HEK293 (cell line): ENCODE measurements at regions of chr2 and their contacts with region 1.

Region 1: DNA sequence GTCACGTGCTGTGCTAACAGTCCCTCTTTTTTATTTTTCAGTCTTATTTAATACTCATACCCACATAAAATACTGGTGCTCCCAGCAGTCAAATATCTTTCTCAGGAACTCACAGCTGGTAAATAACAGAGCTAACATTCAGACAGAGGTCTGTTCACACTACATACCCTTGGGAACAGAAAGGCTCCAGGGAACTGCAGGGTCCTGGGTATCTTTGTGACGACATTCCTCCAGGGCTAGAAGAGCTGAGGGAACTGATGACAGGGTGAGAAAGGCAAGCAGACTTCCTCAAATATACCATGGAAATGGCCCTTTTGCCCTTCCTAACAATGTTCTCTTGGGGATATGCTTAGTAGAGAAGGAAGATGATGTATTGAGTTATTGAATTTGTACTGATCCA is 19.3 kb downstream of the PDE6D start:
- H3K4me3 ChIP-seq: no peak overlapping the region
- H3K27ac ChIP-seq: no peak overlapping the region
- H3K4me1 ChIP-seq: no peaks in the 10 kb centered on the region
- CTCF ChIP-seq: no peak

Region 2: DNA sequence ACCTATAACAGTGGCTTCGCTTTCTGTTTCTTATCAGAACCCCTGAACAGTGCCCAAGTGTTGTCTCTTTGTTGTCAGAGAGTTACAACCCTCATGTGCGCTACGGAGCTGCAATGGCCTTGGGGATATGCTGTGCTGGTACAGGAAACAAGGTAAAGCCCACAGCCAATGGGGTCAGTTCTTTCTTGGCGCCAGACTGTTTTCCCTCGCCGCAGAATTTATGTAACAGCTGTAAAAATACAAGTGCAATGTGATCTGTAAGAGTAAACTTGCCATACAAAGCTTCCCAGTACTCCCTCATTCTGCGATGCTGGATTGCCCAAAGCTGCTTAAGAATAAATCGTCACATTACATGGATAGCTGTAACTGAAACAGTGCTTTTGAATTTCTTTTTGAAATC is 623.0 kb before region 1 on chr2:
- CTCF ChIA-PET with region 1: interaction called, 10 read pairs
- POLR2A ChIA-PET with region 1: no interaction called
- H3K4me3 ChIP-seq: no peak overlapping the region
- H3K27ac ChIP-seq: no peak overlapping the region
- H3K4me1 ChIP-seq: peaks cover 8% of the 10 kb centered on the region; the same call in 1 of the 2 replicates
- CTCF ChIP-seq: no peak

Region 3: GRCh38 chr2:231745303-231746038 is 16.3 kb before region 1 on chr2:
- CTCF ChIA-PET with region 1: interaction called, 13 read pairs
- POLR2A ChIA-PET with region 1: interaction called, 3 read pairs
- H3K4me3 ChIP-seq: no peak overlapping the region
- H3K27ac ChIP-seq: no peak overlapping the region
- H3K4me1 ChIP-seq: no peaks in the 10 kb centered on the region
- CTCF ChIP-seq: no peak